Pancreas (tissue), 10 donors: ENCODE measurements at regions of chr3 and their contacts with region 1.

Region 1: GRCh38 chr3:133776794-133777438 is 28.7 kb upstream of the SRPRB start:
- DNase-seq: peak in 1 of 6 donors; percentile 30
- ATAC-seq: peak; percentile 81 to 97 (median 93)
- H3K4me3 ChIP-seq: no peak overlapping the region
- H3K27ac ChIP-seq: no peak overlapping the region
- H3K4me1 ChIP-seq: no peaks in the 10 kb centered on the region
- H3K27me3 ChIP-seq: no peaks in the 10 kb centered on the region
- CTCF ChIP-seq: peak in 2 of 4 donors; percentile 23 to 38

Region 2: GRCh38 chr3:133547432-133548041 is 229.4 kb before region 1 on chr3:
- intact Hi-C with region 1: no loop called
- DNase-seq: peak in 4 of 6 donors; percentile 67 to 78 (median 74)
- ATAC-seq: peak; percentile 93 to 98 (median 96)
- H3K4me3 ChIP-seq: no peak overlapping the region
- H3K27ac ChIP-seq: peak overlapping the region; percentile 13 to 79 (median 56)
- H3K4me1 ChIP-seq: peaks cover 0 to 15% (median 10%) of the 10 kb centered on the region in 3 donors
- H3K27me3 ChIP-seq: no peaks in the 10 kb centered on the region
- CTCF ChIP-seq: no peak

Region 3: GRCh38 chr3:133661454-133662277 is 115.2 kb before region 1 on chr3 and contains the start of gene TOPBP1:
- intact Hi-C with region 1: loop called in 1 of 3 experiments (anchors 10 kb)
- DNase-seq: peak; percentile 73 to 88 (median 80)
- ATAC-seq: peak; percentile 91 to 96 (median 93)
- H3K4me3 ChIP-seq: peak within 1 kb of the TSS; percentile 67 to 89 (median 82)
- H3K27ac ChIP-seq: peak within 1 kb of the TSS; percentile 52 to 75 (median 68)
- H3K4me1 ChIP-seq: peaks cover 0 to 21% (median 10%) of the 10 kb centered on the region in 3 donors
- H3K27me3 ChIP-seq: no peaks in the 10 kb centered on the region
- CTCF ChIP-seq: no peak
- total RNA-seq, gene TOPBP1: 6.1 to 13.0 (median 8.0) TPM

Region 4: DNA sequence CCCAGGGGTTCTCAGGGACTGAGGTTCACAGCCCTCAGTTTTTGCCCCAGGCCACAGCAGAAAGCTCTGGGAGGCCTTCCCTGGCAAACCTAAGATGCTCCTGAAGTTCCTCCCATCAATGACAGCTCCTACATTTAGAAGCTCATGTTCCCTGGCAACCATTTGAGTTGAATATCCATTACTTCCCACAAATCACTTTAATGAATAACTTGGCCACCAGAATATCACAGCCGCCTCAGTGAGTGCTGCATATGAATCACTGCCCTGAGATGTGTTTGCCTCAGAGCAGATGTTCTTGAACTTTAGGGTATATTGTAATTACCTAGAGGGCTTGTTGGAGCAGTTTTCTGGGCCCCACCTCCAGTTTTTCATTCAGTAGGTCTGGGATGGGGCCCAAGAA is 225.4 kb after region 1 on chr3:
- intact Hi-C with region 1: no loop called
- DNase-seq: no peak
- ATAC-seq: peak in 2 of 4 donors; percentile 67 to 82
- H3K4me3 ChIP-seq: no peak overlapping the region
- H3K27ac ChIP-seq: no peak overlapping the region
- H3K4me1 ChIP-seq: no peaks in the 10 kb centered on the region
- H3K27me3 ChIP-seq: no peaks in the 10 kb centered on the region
- CTCF ChIP-seq: no peak